Calu3 (cell line): ENCODE measurements at regions of chr3 and their contacts with region 1.

Region 1: DNA sequence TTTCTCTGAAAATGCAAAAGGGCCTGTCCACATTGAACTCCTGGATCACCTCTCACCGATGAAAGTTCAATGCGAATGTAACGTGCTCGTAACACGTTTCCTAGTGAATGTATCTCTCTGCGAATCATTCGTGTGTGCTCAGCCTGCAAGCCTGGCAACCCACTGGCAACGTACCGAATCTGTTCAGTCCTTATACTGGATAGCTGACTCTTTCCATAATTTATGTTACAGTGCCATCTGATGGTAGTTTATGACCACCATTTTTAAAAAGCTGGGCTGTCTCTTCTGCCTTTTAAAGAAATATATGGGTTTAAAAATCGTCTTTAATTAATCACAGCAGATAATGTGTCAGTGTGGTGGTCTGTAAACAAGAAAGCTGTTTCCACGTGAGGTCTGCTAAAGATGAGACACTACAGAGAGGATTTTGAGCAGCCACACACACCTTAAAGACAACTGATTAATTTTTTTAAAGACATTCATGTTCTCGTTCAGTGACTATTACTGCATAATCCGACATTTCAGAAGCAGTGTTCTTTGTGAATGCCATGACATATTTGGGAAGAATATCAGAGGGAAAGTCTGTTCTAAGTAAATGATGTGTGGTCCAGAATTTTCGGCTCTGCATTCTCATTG is 69.4 kb upstream of the FOXP1 start:
- DNase-seq: no peak
- H3K4me3 Mint-ChIP-seq: no peak overlapping the region
- H3K27ac Mint-ChIP-seq: no peak overlapping the region
- H3K4me1 Mint-ChIP-seq: peaks cover 28% of the 10 kb centered on the region
- H3K27me3 Mint-ChIP-seq: no peaks in the 10 kb centered on the region
- CTCF ChIP-seq: peak; percentile 15

Region 2: DNA sequence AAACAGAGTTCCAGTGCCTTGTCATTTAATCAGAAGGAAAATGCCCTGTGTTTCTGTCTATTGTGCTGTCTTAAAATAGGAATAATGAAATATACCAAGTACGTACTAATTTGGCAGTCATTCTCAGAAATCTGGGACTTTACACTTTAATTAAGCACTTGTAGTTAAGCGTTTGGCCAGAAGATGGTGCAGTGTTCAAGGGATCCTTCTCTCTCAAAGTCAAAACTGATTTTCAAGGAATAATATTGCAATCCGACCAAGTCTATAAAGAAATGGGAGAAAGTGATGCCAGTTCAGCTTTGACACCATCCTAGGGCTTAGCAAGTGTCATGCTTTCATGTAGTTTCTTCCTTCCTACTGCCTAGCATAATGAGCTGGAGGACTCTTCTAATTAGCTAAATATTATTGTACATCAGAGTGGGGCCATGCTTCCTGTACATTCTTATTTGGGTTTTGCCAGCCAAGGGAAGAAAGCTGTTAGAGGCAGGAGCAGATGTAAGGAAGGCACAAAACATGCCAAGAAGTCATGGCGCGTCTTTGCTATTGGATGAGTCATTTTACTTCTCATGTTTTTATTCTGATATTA is 1588.6 kb before region 1 on chr3:
- CTCF ChIA-PET with region 1: no interaction called
- intact Hi-C with region 1: loop called (anchors 2 kb)
- DNase-seq: peak; percentile 42
- H3K4me3 Mint-ChIP-seq: no peak overlapping the region
- H3K27ac Mint-ChIP-seq: no peak overlapping the region
- H3K4me1 Mint-ChIP-seq: no peaks in the 10 kb centered on the region
- H3K27me3 Mint-ChIP-seq: peaks cover 24% of the 10 kb centered on the region
- CTCF ChIP-seq: peak; percentile 35

Region 3: DNA sequence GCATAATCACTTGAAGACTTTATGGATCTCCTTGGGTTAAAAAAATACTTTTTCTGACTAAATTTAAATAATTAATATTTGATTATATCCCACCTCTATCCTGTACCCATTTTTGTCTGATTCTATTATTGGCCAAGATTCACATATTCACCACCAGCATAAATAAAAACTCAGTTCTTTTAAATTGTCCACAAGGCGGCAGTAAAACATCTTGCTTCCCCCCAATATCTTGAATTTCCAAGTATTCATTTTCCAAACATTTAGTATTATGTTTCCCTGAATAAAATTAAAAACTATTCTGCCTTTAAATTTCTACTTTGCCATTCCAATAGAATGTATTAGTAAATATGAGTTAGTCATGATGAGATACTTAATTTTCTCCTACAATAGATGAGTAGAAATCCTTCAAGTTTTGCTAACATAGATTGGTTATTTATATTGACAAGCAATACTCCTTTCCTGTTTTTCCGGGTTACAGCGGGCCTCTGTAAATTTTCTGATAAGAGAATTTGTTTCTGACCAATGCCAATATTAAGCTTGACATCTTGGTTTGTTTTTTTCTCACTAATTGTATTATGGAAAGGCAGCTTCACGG is 1121.7 kb before region 1 on chr3:
- CTCF ChIA-PET with region 1: no interaction called
- intact Hi-C with region 1: loop called (anchors 5 kb)
- DNase-seq: no peak
- H3K4me3 Mint-ChIP-seq: no peak overlapping the region
- H3K27ac Mint-ChIP-seq: no peak overlapping the region
- H3K4me1 Mint-ChIP-seq: no peaks in the 10 kb centered on the region
- H3K27me3 Mint-ChIP-seq: peaks cover 30% of the 10 kb centered on the region
- CTCF ChIP-seq: no peak

Region 4: GRCh38 chr3:70550723-70551319 is 1102.1 kb before region 1 on chr3:
- CTCF ChIA-PET with region 1: no interaction called
- intact Hi-C with region 1: loop called (anchors 5 kb)
- DNase-seq: peak; percentile 75
- H3K4me3 Mint-ChIP-seq: no peak overlapping the region
- H3K27ac Mint-ChIP-seq: no peak overlapping the region
- H3K4me1 Mint-ChIP-seq: no peaks in the 10 kb centered on the region
- H3K27me3 Mint-ChIP-seq: no peaks in the 10 kb centered on the region
- CTCF ChIP-seq: peak; percentile 33

Region 5: DNA sequence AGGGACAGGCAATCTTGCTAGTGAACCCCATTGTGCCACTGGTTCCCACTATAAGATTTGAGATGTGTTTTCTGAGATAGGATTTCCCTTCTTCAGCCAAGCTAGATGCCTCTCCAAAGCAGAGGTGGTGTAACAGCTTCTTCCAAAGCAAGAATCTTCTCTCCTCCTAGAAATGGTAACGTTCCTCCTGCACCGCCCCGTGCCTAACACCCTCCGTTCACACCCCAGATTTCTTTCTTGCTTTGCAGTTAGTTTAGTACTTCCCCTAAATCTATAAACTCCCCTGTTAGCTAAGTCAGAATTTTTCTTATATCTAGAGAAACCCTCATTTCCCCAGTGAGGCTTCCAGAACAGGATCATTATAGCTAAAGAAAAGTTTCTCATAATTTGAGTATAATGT is 722.8 kb before region 1 on chr3:
- CTCF ChIA-PET with region 1: no interaction called
- intact Hi-C with region 1: no loop called
- DNase-seq: no peak
- H3K4me3 Mint-ChIP-seq: no peak overlapping the region
- H3K27ac Mint-ChIP-seq: no peak overlapping the region
- H3K4me1 Mint-ChIP-seq: no peaks in the 10 kb centered on the region
- H3K27me3 Mint-ChIP-seq: no peaks in the 10 kb centered on the region
- CTCF ChIP-seq: no peak

Region 6: GRCh38 chr3:71684754-71685386 is 32.0 kb after region 1 on chr3:
- CTCF ChIA-PET with region 1: no interaction called
- intact Hi-C with region 1: no loop called
- DNase-seq: peak; percentile 26
- H3K4me3 Mint-ChIP-seq: no peak overlapping the region
- H3K27ac Mint-ChIP-seq: peak overlapping the region; percentile 5
- H3K4me1 Mint-ChIP-seq: peaks cover 29% of the 10 kb centered on the region
- H3K27me3 Mint-ChIP-seq: no peaks in the 10 kb centered on the region
- CTCF ChIP-seq: no peak